Activated CD8-positive, alpha-beta T cell treated with anti-CD3 and anti-CD28 coated beads for 36 hours (primary cell): ENCODE measurements at regions of chr7 and their contacts with region 1.

Region 1: DNA sequence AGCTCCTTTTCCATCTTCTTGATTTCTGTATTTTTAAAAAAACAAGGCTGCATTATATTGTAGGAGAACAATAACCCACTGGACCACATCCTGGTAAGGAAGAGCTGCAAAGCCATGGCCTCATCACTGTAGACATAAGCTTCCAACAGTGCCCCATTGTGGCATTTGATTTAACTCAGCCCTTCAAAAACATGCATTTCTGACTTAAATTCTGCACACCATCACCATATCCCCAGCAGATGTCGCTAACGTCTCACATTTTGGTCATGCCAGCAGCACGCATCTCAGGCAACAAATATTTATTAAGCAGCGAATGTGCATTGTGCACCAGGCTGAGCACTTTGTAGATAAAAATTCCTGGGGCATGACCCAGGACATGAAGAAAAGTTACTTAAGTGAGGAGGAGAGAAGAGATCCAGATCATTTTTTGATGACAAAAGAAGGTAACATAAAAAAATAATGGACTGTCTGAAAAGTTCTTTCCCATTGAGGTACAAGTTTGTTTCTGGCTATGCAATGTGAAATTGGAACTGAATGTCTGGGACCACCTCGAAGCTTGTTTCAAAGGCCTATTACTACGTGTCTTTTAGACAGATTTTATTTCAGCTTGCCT is 164.6 kb upstream of the CDCA7L start:
- DNase-seq: peak; percentile 80
- ATAC-seq: peak; percentile 65
- H3K4me3 Mint-ChIP-seq: no peak overlapping the region
- H3K27ac Mint-ChIP-seq: no peak overlapping the region
- H3K4me1 Mint-ChIP-seq: no peaks in the 10 kb centered on the region
- H3K27me3 Mint-ChIP-seq: peaks cover 1% of the 10 kb centered on the region
- CTCF ChIP-seq: peak; percentile 74

Region 2: GRCh38 chr7:22094413-22095342 is 15.7 kb before region 1 on chr7:
- CTCF ChIA-PET with region 1: interaction called, 22 read pairs
- POLR2A ChIA-PET with region 1: no interaction called
- intact Hi-C with region 1: no loop called
- DNase-seq: no peak
- ATAC-seq: no peak
- H3K4me3 Mint-ChIP-seq: no peak overlapping the region
- H3K27ac Mint-ChIP-seq: no peak overlapping the region
- H3K4me1 Mint-ChIP-seq: no peaks in the 10 kb centered on the region
- H3K27me3 Mint-ChIP-seq: peaks cover 1% of the 10 kb centered on the region
- CTCF ChIP-seq: no peak

Region 3: DNA sequence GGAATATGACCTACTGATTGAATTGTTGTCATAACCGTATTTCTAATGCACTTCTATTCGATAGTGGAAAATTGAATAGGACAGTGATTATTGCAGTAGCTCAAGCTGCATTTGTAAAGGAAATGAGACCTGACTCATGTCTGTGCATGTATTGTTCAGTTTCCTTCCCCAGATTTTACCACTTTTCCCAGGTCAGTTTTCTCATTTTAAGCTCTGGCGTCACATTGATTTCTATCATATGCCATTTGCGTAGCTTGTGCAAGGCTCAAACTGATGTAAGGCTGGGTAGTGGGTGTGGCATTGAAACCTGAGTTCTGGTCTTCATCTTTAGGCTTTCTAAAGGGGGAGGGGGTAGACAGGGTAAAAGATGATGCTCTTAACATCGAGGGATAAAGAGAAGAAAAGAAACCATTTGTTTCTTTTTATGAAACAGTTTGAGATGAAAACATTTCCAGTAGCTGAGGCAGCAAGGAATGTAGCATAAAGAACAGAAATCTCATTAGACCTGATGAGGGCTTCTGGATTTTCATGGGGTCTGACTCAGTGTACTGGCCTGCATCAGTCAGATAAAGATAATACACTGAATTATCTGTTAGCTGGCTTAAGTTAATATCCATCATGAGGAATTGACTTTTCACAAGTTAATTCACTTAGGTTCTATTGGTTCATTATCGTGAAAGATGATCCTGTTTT is 17.6 kb after region 1 on chr7:
- CTCF ChIA-PET with region 1: interaction called, 22 read pairs
- POLR2A ChIA-PET with region 1: no interaction called
- intact Hi-C with region 1: no loop called
- DNase-seq: no peak
- ATAC-seq: no peak
- H3K4me3 Mint-ChIP-seq: no peak overlapping the region
- H3K27ac Mint-ChIP-seq: no peak overlapping the region
- H3K4me1 Mint-ChIP-seq: no peaks in the 10 kb centered on the region
- H3K27me3 Mint-ChIP-seq: peaks cover 3% of the 10 kb centered on the region
- CTCF ChIP-seq: no peak

Region 4: DNA sequence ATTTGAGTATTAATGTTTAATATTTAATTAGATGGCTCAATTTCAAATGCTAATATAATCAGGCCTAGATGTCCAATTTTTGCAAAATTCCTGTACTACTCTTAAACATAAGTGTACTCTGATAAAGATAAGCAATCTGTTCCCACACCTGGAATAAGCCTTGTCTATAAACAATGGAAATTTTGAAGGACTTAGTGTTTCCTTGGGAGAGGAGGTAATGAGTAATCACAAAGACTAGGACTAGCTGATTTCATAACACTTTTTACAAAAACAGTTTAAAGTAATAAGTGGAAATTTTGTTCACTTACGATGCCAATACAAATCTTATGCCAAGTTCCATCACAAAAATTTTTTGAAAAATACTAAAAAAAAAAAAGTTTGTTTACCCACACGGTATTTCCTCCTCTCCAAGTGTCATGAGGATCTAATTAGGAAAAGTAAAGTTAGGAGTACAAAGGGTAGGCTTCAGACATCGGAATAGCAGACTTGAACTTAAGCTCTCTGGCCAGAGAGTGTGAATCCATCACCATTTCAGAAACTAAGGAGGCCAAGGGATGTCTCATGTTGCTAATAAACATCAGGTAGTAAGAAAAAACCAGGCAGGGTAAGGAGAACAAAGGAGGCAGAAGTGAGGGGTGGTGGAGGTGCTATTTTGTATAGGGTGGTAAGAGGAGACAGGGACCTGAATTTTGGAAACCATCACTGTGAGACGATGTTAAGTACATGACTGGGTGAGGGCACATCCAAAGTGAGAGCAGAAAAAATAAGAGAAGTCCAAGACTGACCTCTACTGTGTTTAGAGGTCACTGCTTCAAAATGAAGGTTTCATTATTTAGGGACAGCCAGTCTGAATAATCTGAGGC is 185.3 kb after region 1 on chr7:
- CTCF ChIA-PET with region 1: interaction called, 3 read pairs
- POLR2A ChIA-PET with region 1: no interaction called
- intact Hi-C with region 1: loop called (anchors 10 kb)
- DNase-seq: no peak
- ATAC-seq: no peak
- H3K4me3 Mint-ChIP-seq: no peak overlapping the region
- H3K27ac Mint-ChIP-seq: no peak overlapping the region
- H3K4me1 Mint-ChIP-seq: peaks cover 12% of the 10 kb centered on the region
- H3K27me3 Mint-ChIP-seq: peaks cover 4% of the 10 kb centered on the region
- CTCF ChIP-seq: no peak

Region 5: DNA sequence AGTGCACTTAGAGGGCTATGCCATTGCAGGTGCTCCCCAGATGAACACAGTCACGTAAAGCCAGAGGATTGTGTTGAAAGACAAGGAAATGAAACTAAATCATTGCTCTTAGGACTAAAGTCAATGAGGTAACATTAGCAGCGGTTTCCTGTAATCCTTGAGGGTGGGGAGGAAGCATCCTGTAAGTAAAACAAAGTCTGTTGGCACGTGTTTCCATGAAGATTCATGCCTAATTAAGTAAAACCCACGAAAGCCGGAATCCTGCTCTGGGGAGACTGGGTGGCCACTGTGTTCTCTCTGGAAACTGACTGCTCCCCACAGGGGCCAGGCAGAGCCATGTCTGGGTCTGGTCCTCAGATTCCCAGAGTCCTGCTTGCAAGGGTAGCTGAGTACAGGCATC is 371.4 kb after region 1 on chr7:
- CTCF ChIA-PET with region 1: interaction called, 58 read pairs
- POLR2A ChIA-PET with region 1: no interaction called
- intact Hi-C with region 1: no loop called
- DNase-seq: no peak
- ATAC-seq: no peak
- H3K4me3 Mint-ChIP-seq: no peak overlapping the region
- H3K27ac Mint-ChIP-seq: no peak overlapping the region
- H3K4me1 Mint-ChIP-seq: no peaks in the 10 kb centered on the region
- H3K27me3 Mint-ChIP-seq: no peaks in the 10 kb centered on the region
- CTCF ChIP-seq: no peak

Region 6: GRCh38 chr7:22499044-22499443 is 388.7 kb after region 1 on chr7:
- CTCF ChIA-PET with region 1: interaction called, 13 read pairs
- POLR2A ChIA-PET with region 1: no interaction called
- intact Hi-C with region 1: no loop called
- DNase-seq: no peak
- ATAC-seq: no peak
- H3K4me3 Mint-ChIP-seq: no peak overlapping the region
- H3K27ac Mint-ChIP-seq: no peak overlapping the region
- H3K4me1 Mint-ChIP-seq: peaks cover 4% of the 10 kb centered on the region
- H3K27me3 Mint-ChIP-seq: peaks cover 16% of the 10 kb centered on the region
- CTCF ChIP-seq: no peak